ENCODE measurements at regions of chr3 and their contacts with region 1.

Region 1: DNA sequence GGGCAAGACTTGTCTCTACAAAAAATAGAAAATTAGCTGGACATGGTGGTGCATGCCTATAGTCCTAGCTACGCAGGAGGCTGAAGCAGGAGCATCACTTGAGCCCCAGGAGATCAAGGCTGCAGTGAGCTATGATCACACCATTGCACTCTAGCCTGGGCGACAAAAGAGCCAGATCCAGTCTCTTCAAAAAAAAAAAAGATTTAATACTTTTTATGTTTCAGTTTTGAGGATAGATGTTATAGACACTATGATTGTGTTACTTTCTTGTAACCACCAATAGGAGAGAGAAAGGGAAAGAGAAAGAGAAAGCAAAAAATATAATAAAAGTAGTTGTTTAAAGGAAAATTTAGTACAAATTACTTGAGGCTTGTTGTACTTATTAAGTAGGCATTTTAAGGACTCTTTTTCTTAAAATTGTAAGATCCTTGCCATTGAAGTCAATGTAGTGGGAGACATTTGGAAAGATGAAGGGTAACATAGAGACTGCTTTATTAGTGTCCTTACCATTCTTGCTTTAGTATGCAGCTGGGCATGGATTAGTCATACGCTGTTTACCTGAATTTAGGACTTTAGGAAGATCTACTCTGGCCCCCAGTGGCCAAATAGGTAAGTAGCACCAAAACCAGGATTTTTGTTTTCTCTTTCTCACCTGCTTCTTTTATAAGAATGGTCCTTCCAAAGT is 35.1 kb upstream of the ZDHHC23 start:
- DNase-seq: peak; percentile 44 to 61 (median 51)
- H3K4me3 ChIP-seq: no peak overlapping the region
- H3K4me3 Mint-ChIP-seq: peak overlapping the region; percentile 50 to 82 (median 64)
- H3K27ac ChIP-seq: no peak overlapping the region
- H3K27ac Mint-ChIP-seq: peak overlapping the region in 5 of 7 donors; percentile 10 to 81 (median 56)
- H3K4me1 ChIP-seq: no peaks in the 10 kb centered on the region
- H3K4me1 Mint-ChIP-seq: peaks cover 0 to 5% (median 4%) of the 10 kb centered on the region in 4 donors
- H3K27me3 ChIP-seq: no peaks in the 10 kb centered on the region
- H3K27me3 Mint-ChIP-seq: no peaks in the 10 kb centered on the region

Region 2: GRCh38 chr3:113051302-113051711 is 861.4 kb before region 1 on chr3:
- CTCF ChIA-PET with region 1: no interaction called
- POLR2A ChIA-PET with region 1: no interaction called
- intact Hi-C with region 1: loop called (anchors 2 kb)
- DNase-seq: peak; percentile 77 to 84 (median 80)
- H3K4me3 ChIP-seq: no peak overlapping the region
- H3K4me3 Mint-ChIP-seq: no peak overlapping the region
- H3K27ac ChIP-seq: no peak overlapping the region
- H3K27ac Mint-ChIP-seq: no peak overlapping the region
- H3K4me1 ChIP-seq: peaks cover 8% of the 10 kb centered on the region
- H3K4me1 Mint-ChIP-seq: peaks cover 0 to 9% (median 2%) of the 10 kb centered on the region in 4 donors
- H3K27me3 ChIP-seq: no peaks in the 10 kb centered on the region
- H3K27me3 Mint-ChIP-seq: no peaks in the 10 kb centered on the region

Region 3: GRCh38 chr3:113736548-113737089 is 176.1 kb before region 1 on chr3:
- CTCF ChIA-PET with region 1: interaction called, 40 read pairs
- POLR2A ChIA-PET with region 1: no interaction called
- intact Hi-C with region 1: loop called (anchors 1 kb)
- DNase-seq: peak; percentile 47 to 72 (median 71)
- H3K4me3 ChIP-seq: no peak overlapping the region
- H3K4me3 Mint-ChIP-seq: peak overlapping the region in 1 of 8 donors; percentile 15
- H3K27ac ChIP-seq: peak overlapping the region; percentile 32
- H3K27ac Mint-ChIP-seq: peak overlapping the region; percentile 48 to 88 (median 77)
- H3K4me1 ChIP-seq: peaks cover 32% of the 10 kb centered on the region
- H3K4me1 Mint-ChIP-seq: peaks cover 35 to 61% (median 42%) of the 10 kb centered on the region in 4 donors
- H3K27me3 ChIP-seq: no peaks in the 10 kb centered on the region
- H3K27me3 Mint-ChIP-seq: no peaks in the 10 kb centered on the region

Region 4: DNA sequence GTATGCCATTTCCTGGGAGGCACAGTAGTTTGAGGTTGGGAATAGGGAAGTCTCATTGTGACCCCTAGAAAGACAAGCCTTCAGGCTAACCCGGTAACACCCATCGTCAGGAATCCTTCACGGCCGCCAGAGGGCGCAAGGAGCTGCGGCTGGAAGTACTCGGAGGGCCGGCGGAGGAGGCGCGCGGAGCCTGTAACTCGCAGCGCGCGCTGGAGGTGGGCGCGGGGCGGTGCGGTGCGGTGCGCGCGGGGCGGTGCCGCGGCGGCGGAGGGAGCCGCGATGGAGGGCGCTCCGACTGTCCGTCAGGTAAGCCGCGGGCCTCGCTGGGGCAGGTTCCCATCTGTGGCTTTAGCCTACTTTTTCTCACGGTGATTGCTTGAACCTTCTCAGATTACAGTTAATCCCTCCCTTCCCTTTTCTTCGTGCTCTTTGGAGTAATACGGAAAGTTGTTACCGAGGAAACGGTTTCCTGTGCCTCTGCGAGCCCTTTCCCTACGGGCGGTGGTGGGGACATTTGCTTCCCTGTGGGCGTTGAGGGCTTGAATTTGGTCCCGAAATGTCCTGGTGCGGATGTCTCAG is 74.0 kb before region 1 on chr3 and contains the start of gene GRAMD1C:
- CTCF ChIA-PET with region 1: interaction called, 157 read pairs
- POLR2A ChIA-PET with region 1: interaction called, 3 read pairs
- intact Hi-C with region 1: loop called (anchors 1 kb)
- DNase-seq: peak; percentile 81 to 84 (median 83)
- H3K4me3 ChIP-seq: peak within 1 kb of the TSS; percentile 32 to 68
- H3K4me3 Mint-ChIP-seq: peak within 1 kb of the TSS; percentile 71 to 84 (median 81)
- H3K27ac ChIP-seq: no peak within 1 kb of the TSS
- H3K27ac Mint-ChIP-seq: peak within 1 kb of the TSS in 4 of 7 donors; percentile 31 to 56 (median 38)
- H3K4me1 ChIP-seq: peaks cover 7% of the 10 kb centered on the region
- H3K4me1 Mint-ChIP-seq: peaks cover 0 to 6% (median 6%) of the 10 kb centered on the region in 4 donors
- H3K27me3 ChIP-seq: no peaks in the 10 kb centered on the region
- H3K27me3 Mint-ChIP-seq: peaks cover 0 to 1% of the 10 kb centered on the region in 2 donors
- total RNA-seq, gene GRAMD1C: 2.6 to 2.8 TPM

Region 5: DNA sequence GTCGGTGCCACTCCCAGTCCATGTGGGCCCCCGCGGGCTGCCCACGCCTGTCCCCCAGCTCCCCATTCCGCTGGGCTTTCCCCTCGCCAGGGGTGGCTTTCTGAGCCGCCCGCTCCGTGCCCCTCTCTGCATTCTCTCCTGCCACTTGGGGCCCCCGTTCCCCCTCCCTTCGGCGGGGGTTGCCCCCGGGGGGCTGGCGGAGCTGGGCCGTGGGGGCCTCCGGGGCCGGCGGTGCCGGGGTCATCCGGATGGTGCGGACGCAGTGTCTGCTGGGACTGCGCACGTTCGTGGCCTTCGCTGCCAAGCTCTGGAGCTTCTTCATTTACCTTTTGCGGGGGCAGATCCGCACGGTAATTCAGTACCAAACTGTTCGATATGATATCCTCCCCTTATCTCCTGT is 27.6 kb before region 1 on chr3:
- CTCF ChIA-PET with region 1: no interaction called
- POLR2A ChIA-PET with region 1: no interaction called
- intact Hi-C with region 1: no loop called
- DNase-seq: no peak
- H3K4me3 ChIP-seq: no peak overlapping the region
- H3K4me3 Mint-ChIP-seq: no peak overlapping the region
- H3K27ac ChIP-seq: no peak overlapping the region
- H3K27ac Mint-ChIP-seq: no peak overlapping the region
- H3K4me1 ChIP-seq: no peaks in the 10 kb centered on the region
- H3K4me1 Mint-ChIP-seq: no peaks in the 10 kb centered on the region
- H3K27me3 ChIP-seq: no peaks in the 10 kb centered on the region
- H3K27me3 Mint-ChIP-seq: peaks cover 0 to 2% of the 10 kb centered on the region in 2 donors